Heart right ventricle (tissue), 16 donors: ENCODE measurements at regions of chr5 and their contacts with region 1.

Region 1: GRCh38 chr5:61666064-61666621 is 334.1 kb downstream of the ZSWIM6 start:
- DNase-seq: peak in 1 of 2 donors; percentile 38
- ATAC-seq: peak; percentile 42 to 88 (median 80)
- H3K4me3 ChIP-seq: peak overlapping the region in 4 of 10 donors; percentile 8 to 31 (median 13)
- H3K27ac ChIP-seq: peak overlapping the region in 8 of 10 donors; percentile 12 to 71 (median 54)
- H3K4me1 ChIP-seq: peaks cover 0 to 26% (median 10%) of the 10 kb centered on the region in 9 donors
- H3K27me3 ChIP-seq: no peaks in the 10 kb centered on the region
- CTCF ChIP-seq: no peak

Region 2: GRCh38 chr5:61277190-61277589 is 389.0 kb before region 1 on chr5:
- intact Hi-C with region 1: loop called in 1 of 10 experiments (anchors 5 kb)
- DNase-seq: peak in 1 of 2 donors; percentile 20
- ATAC-seq: peak in 6 of 8 donors; percentile 30 to 74 (median 64)
- H3K4me3 ChIP-seq: peak overlapping the region in 5 of 10 donors; percentile 8 to 28 (median 19)
- H3K27ac ChIP-seq: peak overlapping the region in 3 of 10 donors; percentile 5 to 88 (median 53)
- H3K4me1 ChIP-seq: peaks cover 0 to 76% (median 6%) of the 10 kb centered on the region in 9 donors
- H3K27me3 ChIP-seq: no peaks in the 10 kb centered on the region
- CTCF ChIP-seq: peak in 6 of 9 donors; percentile 21 to 57 (median 38)

Region 3: GRCh38 chr5:61719124-61719523 is 53.0 kb after region 1 on chr5:
- intact Hi-C with region 1: loop called in 1 of 10 experiments (anchors 1 kb)
- DNase-seq: no peak
- ATAC-seq: no peak
- H3K4me3 ChIP-seq: no peak overlapping the region
- H3K27ac ChIP-seq: no peak overlapping the region
- H3K4me1 ChIP-seq: no peaks in the 10 kb centered on the region
- H3K27me3 ChIP-seq: peaks cover 0 to 2% (median 0%) of the 10 kb centered on the region in 7 donors
- CTCF ChIP-seq: no peak